ENCODE measurements at regions of chr12 and their contacts with region 1.

Region 1: GRCh38 chr12:110449799-110450497 is at the start of gene ARPC3:
- DNase-seq: peak; percentile 97
- H3K4me3 ChIP-seq: peak within 1 kb of the TSS; percentile 89 to 97 (median 93)
- H3K27ac ChIP-seq: peak within 1 kb of the TSS; percentile 93 to 99 (median 97)
- H3K4me1 ChIP-seq: peaks cover 4 to 35% (median 19%) of the 10 kb centered on the region in 4 donors
- H3K27me3 ChIP-seq: no peaks in the 10 kb centered on the region
- CTCF ChIP-seq: peak; percentile 72 to 90 (median 80)
- EP300 ChIP-seq: no peak
- POLR2A ChIP-seq: peak; percentile 78
- total RNA-seq, gene ARPC3: 27.9 to 429 (median 262) TPM

Region 2: DNA sequence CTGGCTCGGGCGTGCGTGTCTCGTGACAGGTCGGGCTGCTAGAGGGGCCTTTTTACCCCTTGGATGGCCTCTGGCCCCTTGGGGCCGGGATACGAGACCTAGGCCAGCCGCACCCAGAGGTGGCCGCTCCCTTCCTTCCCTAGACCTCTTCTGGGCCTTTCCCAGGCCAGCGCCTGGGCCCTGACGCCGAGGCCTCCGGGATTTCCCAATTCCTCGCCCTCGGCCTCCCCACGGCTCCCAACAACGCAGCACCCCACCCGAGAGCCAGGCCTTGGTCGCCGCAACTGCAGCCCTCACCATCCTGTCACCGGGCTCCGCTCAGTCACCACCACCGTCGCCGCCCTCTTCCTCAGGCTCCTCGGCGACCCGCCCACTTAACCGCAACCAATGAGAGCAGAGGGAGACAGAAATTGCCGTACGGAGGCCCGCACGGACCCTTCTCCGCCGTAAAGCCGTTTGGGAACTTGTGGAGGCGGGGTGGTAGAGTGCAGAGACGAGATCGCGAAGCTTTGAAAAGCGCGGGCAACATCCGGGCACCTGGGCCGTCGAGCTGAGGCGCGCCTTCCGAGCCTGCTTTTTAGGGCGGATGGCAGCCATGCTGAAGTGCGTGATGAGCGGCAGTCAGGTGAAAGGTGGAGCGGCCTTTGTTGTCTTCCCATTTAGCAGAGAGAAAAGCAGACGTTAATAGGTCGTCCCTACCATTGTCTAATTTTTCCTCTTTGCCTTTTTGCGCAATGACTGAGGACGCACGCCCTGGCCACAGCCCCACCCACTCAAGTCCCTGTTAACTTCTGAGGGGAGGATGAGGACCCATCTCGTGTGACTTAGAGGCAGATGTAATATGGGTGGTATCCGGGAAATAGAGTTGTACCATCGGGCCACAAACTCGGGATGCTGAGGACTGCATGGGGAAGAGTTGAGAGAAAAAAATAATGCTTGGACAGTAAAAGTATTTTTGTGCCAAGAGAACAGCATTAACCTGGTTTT is 52.1 kb after region 1 on chr12 and contains the starts of genes RAD9B and VPS29:
- in situ Hi-C with region 1: loop called in 1 of 4 experiments (anchors 10 kb)
- intact Hi-C with region 1: no loop called
- DNase-seq: peak; percentile 99
- H3K4me3 ChIP-seq: peak within 1 kb of the TSS; percentile 57 to 89 (median 83)
- H3K27ac ChIP-seq: peak within 1 kb of the TSS; percentile 90 to 98 (median 93)
- H3K4me1 ChIP-seq: peaks cover 18 to 33% (median 25%) of the 10 kb centered on the region in 4 donors
- H3K27me3 ChIP-seq: no peaks in the 10 kb centered on the region
- CTCF ChIP-seq: peak in 1 of 5 experiments; percentile 11
- EP300 ChIP-seq: no peak
- POLR2A ChIP-seq: peak; percentile 97
- total RNA-seq, gene RAD9B: 0.27 to 0.32 TPM in 2 of 4 donors, not detected in the others
- total RNA-seq, gene VPS29: 16.3 to 142 (median 79.3) TPM

Region 3: GRCh38 chr12:110600254-110600653 is 150.3 kb after region 1 on chr12:
- in situ Hi-C with region 1: loop called in 1 of 4 experiments (anchors 10 kb)
- intact Hi-C with region 1: loop called (anchors 5 kb)
- DNase-seq: no peak
- H3K4me3 ChIP-seq: no peak overlapping the region
- H3K27ac ChIP-seq: no peak overlapping the region
- H3K4me1 ChIP-seq: no peaks in the 10 kb centered on the region
- H3K27me3 ChIP-seq: no peaks in the 10 kb centered on the region
- CTCF ChIP-seq: peak; percentile 26 to 61 (median 41)
- EP300 ChIP-seq: no peak
- POLR2A ChIP-seq: no peak

Region 4: GRCh38 chr12:110742718-110743570 is 293.0 kb after region 1 on chr12 and contains the start of gene PPP1CC:
- in situ Hi-C with region 1: loop called in 1 of 4 experiments (anchors 25 kb)
- intact Hi-C with region 1: no loop called
- DNase-seq: peak; percentile 94
- H3K4me3 ChIP-seq: peak within 1 kb of the TSS; percentile 74 to 94 (median 79)
- H3K27ac ChIP-seq: peak within 1 kb of the TSS; percentile 91 to 97 (median 94)
- H3K4me1 ChIP-seq: peaks cover 9 to 61% (median 50%) of the 10 kb centered on the region in 4 donors
- H3K27me3 ChIP-seq: no peaks in the 10 kb centered on the region
- CTCF ChIP-seq: peak in 1 of 5 experiments; percentile 8
- EP300 ChIP-seq: no peak
- POLR2A ChIP-seq: peak; percentile 92
- total RNA-seq, gene PPP1CC: 156 to 759 (median 244) TPM

Region 5: DNA sequence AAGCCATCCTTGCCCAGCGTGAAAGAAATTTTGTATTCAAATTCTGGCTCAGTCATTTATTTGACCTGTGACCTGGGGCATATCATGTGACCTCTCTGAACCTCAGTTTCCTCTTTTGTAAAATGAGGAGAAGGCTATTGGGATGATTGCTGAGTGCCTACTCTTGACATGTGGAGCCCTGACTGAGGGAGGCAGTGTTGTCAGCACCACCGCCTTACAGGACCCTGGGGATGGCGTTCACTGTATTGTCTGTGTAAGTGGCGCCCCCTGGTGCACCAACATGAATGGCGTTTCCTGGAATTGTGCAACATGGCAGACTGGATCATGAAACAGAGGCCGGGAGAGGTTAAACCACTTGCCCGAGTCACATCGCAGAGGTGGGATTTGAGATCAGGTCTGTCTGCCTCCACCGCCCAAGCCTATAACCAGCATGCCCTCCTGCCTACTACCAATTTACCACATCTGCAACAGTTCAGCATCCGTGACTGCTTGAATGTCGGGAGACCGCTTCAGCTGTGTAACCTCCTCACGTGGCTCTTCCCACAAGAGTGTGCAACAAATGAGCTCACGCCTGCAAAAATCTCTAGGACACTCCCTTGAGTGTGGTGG is 376.7 kb after region 1 on chr12:
- in situ Hi-C with region 1: loop called in 2 of 4 experiments (anchors 25 kb)
- intact Hi-C with region 1: no loop called
- DNase-seq: peak; percentile 91
- H3K4me3 ChIP-seq: no peak overlapping the region
- H3K27ac ChIP-seq: no peak overlapping the region
- H3K4me1 ChIP-seq: peaks cover 0 to 5% (median 0%) of the 10 kb centered on the region in 4 donors
- H3K27me3 ChIP-seq: no peaks in the 10 kb centered on the region
- CTCF ChIP-seq: peak; percentile 70 to 96 (median 86)
- EP300 ChIP-seq: no peak
- POLR2A ChIP-seq: no peak

Measured in transverse colon (tissue), 4 donors.